ENCODE measurements at regions of chr5 and their contacts with region 1.

Region 1: DNA sequence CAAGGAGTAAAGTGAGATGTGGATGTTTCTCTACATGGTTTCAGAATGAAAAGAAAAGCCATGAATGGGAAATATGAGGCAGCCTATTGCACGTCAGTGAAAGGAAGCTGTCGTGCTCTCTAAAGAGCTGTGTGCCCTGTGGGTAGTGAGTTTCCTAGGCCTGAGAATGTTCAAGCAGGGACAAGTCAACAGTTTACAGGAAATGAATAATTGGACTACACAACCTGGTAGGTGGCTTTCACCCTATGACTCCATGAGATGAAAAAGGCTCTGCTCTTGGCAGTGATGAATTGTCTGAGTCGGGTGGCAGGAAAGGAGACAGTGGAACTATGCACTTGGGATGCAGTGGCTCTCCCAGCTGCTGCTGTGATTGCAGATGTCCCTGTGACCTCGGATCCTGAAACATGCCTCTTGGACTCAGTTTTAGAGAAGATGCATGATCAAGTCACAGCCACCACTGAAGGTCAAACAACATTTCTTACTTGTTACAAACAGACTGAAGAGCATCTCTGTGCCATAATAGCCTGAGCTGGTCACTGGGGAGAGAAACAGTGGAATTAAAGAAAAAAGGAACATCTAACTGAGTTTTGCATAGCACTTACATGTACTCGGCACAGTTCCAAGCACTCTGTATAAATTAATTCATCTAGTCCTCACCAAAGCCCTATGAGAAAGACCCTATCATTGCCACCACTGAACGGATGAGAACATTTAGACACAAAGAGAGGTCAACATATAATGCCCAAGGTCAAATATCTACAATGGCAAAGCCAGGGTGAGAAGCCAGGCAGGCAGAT is 293.7 kb downstream of the SPOCK1 start:
- DNase-seq: no peak
- ATAC-seq: no peak
- H3K4me3 ChIP-seq: no peak overlapping the region
- H3K27ac ChIP-seq: no peak overlapping the region
- H3K4me1 ChIP-seq: no peaks in the 10 kb centered on the region
- H3K27me3 ChIP-seq: no peaks in the 10 kb centered on the region
- CTCF ChIP-seq: no peak
- EP300 ChIP-seq: no peak
- POLR2A ChIP-seq: no peak
- RAD21 ChIP-seq: no peak

Region 2: GRCh38 chr5:137152616-137153015 is 52.8 kb before region 1 on chr5:
- CTCF ChIA-PET with region 1: no interaction called
- POLR2A ChIA-PET with region 1: no interaction called
- in situ Hi-C with region 1: no loop called
- intact Hi-C with region 1: loop called (anchors 2 kb)
- DNase-seq: no peak
- ATAC-seq: no peak
- H3K4me3 ChIP-seq: no peak overlapping the region
- H3K27ac ChIP-seq: no peak overlapping the region
- H3K4me1 ChIP-seq: no peaks in the 10 kb centered on the region
- H3K27me3 ChIP-seq: no peaks in the 10 kb centered on the region
- CTCF ChIP-seq: no peak
- EP300 ChIP-seq: no peak
- POLR2A ChIP-seq: no peak
- RAD21 ChIP-seq: no peak

Measured in K562 (cell line).